Natural killer cell (primary cell): ENCODE measurements at regions of chr15 and their contacts with region 1.

Region 1: GRCh38 chr15:81323944-81324881 is at the start of gene STARD5:
- DNase-seq: peak; percentile 89 to 96
- ATAC-seq: peak; percentile 99 to 100 (median 99)
- H3K4me3 ChIP-seq: peak within 1 kb of the TSS; percentile 67
- H3K4me3 Mint-ChIP-seq: peak within 1 kb of the TSS; percentile 94
- H3K27ac ChIP-seq: peak within 1 kb of the TSS; percentile 11
- H3K27ac Mint-ChIP-seq: peak within 1 kb of the TSS; percentile 68 to 90
- H3K4me1 ChIP-seq: peaks cover 14% of the 10 kb centered on the region
- H3K4me1 Mint-ChIP-seq: peaks cover 17 to 18% of the 10 kb centered on the region in 2 donors
- H3K27me3 ChIP-seq: no peaks in the 10 kb centered on the region
- H3K27me3 Mint-ChIP-seq: no peaks in the 10 kb centered on the region
- CTCF ChIP-seq: no peak
- total RNA-seq, gene STARD5: 4.7 to 6.6 (median 6.3) TPM

Region 2: GRCh38 chr15:80844011-80844755 is 480.0 kb before region 1 on chr15:
- intact Hi-C with region 1: no loop called
- DNase-seq: no peak
- ATAC-seq: no peak
- H3K4me3 ChIP-seq: no peak overlapping the region
- H3K4me3 Mint-ChIP-seq: no peak overlapping the region
- H3K27ac ChIP-seq: no peak overlapping the region
- H3K27ac Mint-ChIP-seq: no peak overlapping the region
- H3K4me1 ChIP-seq: no peaks in the 10 kb centered on the region
- H3K4me1 Mint-ChIP-seq: peaks cover 0 to 1% of the 10 kb centered on the region in 2 donors
- H3K27me3 ChIP-seq: no peaks in the 10 kb centered on the region
- H3K27me3 Mint-ChIP-seq: peaks cover under 1 to 11% of the 10 kb centered on the region in 2 donors
- CTCF ChIP-seq: no peak

Region 3: GRCh38 chr15:81286621-81287121 is 37.5 kb before region 1 on chr15:
- intact Hi-C with region 1: loop called (anchors 5 kb)
- DNase-seq: peak in 1 of 2 donors; percentile 73
- ATAC-seq: peak; percentile 90 to 94 (median 93)
- H3K4me3 ChIP-seq: no peak overlapping the region
- H3K4me3 Mint-ChIP-seq: peak overlapping the region; percentile 81
- H3K27ac ChIP-seq: peak overlapping the region; percentile 84
- H3K27ac Mint-ChIP-seq: peak overlapping the region; percentile 93 to 98
- H3K4me1 ChIP-seq: peaks cover 41% of the 10 kb centered on the region
- H3K4me1 Mint-ChIP-seq: peaks cover 42 to 43% of the 10 kb centered on the region in 2 donors
- H3K27me3 ChIP-seq: no peaks in the 10 kb centered on the region
- H3K27me3 Mint-ChIP-seq: no peaks in the 10 kb centered on the region
- CTCF ChIP-seq: no peak

Region 4: DNA sequence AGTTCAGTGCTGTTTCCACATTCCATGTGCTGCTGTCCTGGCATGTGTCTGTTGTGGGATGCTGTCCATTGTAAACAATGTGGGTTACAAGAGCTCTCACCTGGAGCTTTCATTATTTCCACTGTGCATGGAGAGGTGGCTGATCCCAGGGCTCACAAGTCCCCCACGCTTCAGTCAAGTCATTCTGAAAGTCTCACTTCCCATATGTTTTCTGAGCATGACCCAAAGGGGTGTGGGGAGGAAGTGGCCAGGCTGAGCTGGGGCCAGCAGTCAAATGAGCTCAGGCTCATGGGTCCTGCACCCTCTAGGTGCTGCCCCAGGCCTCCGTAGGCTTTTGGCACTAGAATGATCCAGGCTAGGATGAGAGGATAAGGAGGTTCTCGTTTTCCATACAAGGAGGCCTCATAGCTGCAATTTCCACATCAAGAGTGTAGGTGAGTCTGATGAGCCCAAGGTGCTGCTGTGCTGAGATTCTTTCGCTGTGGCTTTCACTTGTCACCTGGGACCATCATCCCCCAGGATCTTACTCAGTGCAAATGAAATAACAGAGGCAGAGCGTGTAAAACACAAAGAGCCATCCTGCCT is 22.3 kb before region 1 on chr15:
- intact Hi-C with region 1: loop called (anchors 2 kb)
- DNase-seq: peak in 1 of 2 donors; percentile 39
- ATAC-seq: peak; percentile 49 to 70 (median 61)
- H3K4me3 ChIP-seq: peak overlapping the region; percentile 72
- H3K4me3 Mint-ChIP-seq: peak overlapping the region; percentile 99
- H3K27ac ChIP-seq: peak overlapping the region; percentile 81
- H3K27ac Mint-ChIP-seq: peak overlapping the region; percentile 97 to 98
- H3K4me1 ChIP-seq: peaks cover 84% of the 10 kb centered on the region
- H3K4me1 Mint-ChIP-seq: peaks cover 97 to 98% of the 10 kb centered on the region in 2 donors
- H3K27me3 ChIP-seq: no peaks in the 10 kb centered on the region
- H3K27me3 Mint-ChIP-seq: no peaks in the 10 kb centered on the region
- CTCF ChIP-seq: no peak

Region 5: GRCh38 chr15:81433462-81433861 is 109.2 kb after region 1 on chr15:
- intact Hi-C with region 1: no loop called
- DNase-seq: no peak
- ATAC-seq: no peak
- H3K4me3 ChIP-seq: no peak overlapping the region
- H3K4me3 Mint-ChIP-seq: no peak overlapping the region
- H3K27ac ChIP-seq: no peak overlapping the region
- H3K27ac Mint-ChIP-seq: no peak overlapping the region
- H3K4me1 ChIP-seq: no peaks in the 10 kb centered on the region
- H3K4me1 Mint-ChIP-seq: peaks cover 0 to 5% of the 10 kb centered on the region in 2 donors
- H3K27me3 ChIP-seq: no peaks in the 10 kb centered on the region
- H3K27me3 Mint-ChIP-seq: peaks cover 17 to 61% of the 10 kb centered on the region in 2 donors
- CTCF ChIP-seq: no peak